Heart right ventricle (tissue), 16 donors: ENCODE measurements at regions of chr18 and their contacts with region 1.

Region 1: GRCh38 chr18:30088238-30089015 is 954.1 kb downstream of the DSC3 start:
- DNase-seq: no peak
- ATAC-seq: no peak
- H3K4me3 ChIP-seq: no peak overlapping the region
- H3K27ac ChIP-seq: no peak overlapping the region
- H3K4me1 ChIP-seq: no peaks in the 10 kb centered on the region
- H3K27me3 ChIP-seq: no peaks in the 10 kb centered on the region
- CTCF ChIP-seq: no peak

Region 2: GRCh38 chr18:30016179-30016578 is 72.2 kb before region 1 on chr18:
- intact Hi-C with region 1: no loop called
- DNase-seq: no peak
- ATAC-seq: no peak
- H3K4me3 ChIP-seq: no peak overlapping the region
- H3K27ac ChIP-seq: no peak overlapping the region
- H3K4me1 ChIP-seq: no peaks in the 10 kb centered on the region
- H3K27me3 ChIP-seq: no peaks in the 10 kb centered on the region
- CTCF ChIP-seq: no peak

Region 3: GRCh38 chr18:30039196-30039595 is 49.2 kb before region 1 on chr18:
- intact Hi-C with region 1: no loop called
- DNase-seq: no peak
- ATAC-seq: no peak
- H3K4me3 ChIP-seq: no peak overlapping the region
- H3K27ac ChIP-seq: no peak overlapping the region
- H3K4me1 ChIP-seq: no peaks in the 10 kb centered on the region
- H3K27me3 ChIP-seq: no peaks in the 10 kb centered on the region
- CTCF ChIP-seq: no peak

Region 4: GRCh38 chr18:30139631-30140287 is 51.3 kb after region 1 on chr18:
- intact Hi-C with region 1: loop called in 1 of 10 experiments (anchors 10 kb)
- DNase-seq: no peak
- ATAC-seq: no peak
- H3K4me3 ChIP-seq: no peak overlapping the region
- H3K27ac ChIP-seq: no peak overlapping the region
- H3K4me1 ChIP-seq: no peaks in the 10 kb centered on the region
- H3K27me3 ChIP-seq: no peaks in the 10 kb centered on the region
- CTCF ChIP-seq: no peak

Region 5: DNA sequence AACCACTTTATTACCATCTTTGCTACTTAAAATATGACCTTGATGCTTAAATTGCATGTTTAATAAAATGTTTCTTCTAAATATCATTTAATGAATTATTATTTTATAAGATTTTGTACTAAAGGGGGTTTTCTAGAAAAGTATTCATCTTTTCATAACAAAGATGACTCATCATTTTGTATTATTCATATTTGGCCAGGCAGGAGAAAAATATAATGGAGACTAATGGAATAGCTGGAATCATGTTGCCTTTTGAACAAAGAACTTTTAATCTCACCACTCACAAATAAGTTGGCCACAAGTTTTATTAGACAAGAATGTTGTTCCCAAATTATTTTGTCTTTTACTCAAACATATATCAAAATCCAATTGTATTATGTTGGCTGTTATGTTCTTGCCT is 71.7 kb after region 1 on chr18:
- intact Hi-C with region 1: no loop called
- DNase-seq: no peak
- ATAC-seq: no peak
- H3K4me3 ChIP-seq: no peak overlapping the region
- H3K27ac ChIP-seq: no peak overlapping the region
- H3K4me1 ChIP-seq: no peaks in the 10 kb centered on the region
- H3K27me3 ChIP-seq: no peaks in the 10 kb centered on the region
- CTCF ChIP-seq: no peak

Region 6: DNA sequence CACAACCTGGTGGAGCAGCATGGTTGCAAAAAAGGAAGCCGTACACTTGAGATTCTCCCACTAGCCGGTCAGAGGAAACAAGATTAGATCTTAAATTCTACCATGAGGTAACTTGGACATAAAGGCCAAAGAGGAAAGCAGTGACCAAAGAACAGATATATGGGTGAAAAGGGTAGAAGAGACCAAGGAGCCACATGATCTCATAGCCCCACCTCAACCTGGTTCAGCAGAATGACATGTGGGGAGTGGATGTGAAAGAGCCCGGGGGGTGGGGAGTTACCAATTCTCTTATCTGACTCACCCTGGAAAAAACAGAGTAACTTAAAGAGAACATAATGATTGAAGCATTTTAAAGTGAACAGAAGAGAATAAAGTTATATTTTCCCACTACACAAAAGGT is 271.1 kb after region 1 on chr18:
- intact Hi-C with region 1: no loop called
- DNase-seq: no peak
- ATAC-seq: no peak
- H3K4me3 ChIP-seq: no peak overlapping the region
- H3K27ac ChIP-seq: no peak overlapping the region
- H3K4me1 ChIP-seq: no peaks in the 10 kb centered on the region
- H3K27me3 ChIP-seq: no peaks in the 10 kb centered on the region
- CTCF ChIP-seq: no peak